ENCODE measurements at regions of chr14 and their contacts with region 1.

Region 1: GRCh38 chr14:34012978-34013720 is 62.3 kb upstream of the EGLN3 start:
- DNase-seq: no peak
- ATAC-seq: no peak
- H3K4me3 ChIP-seq: no peak overlapping the region
- H3K27ac ChIP-seq: no peak overlapping the region
- H3K4me1 ChIP-seq: peaks cover 2% of the 10 kb centered on the region
- H3K27me3 ChIP-seq: no peaks in the 10 kb centered on the region
- CTCF ChIP-seq: no peak

Region 2: DNA sequence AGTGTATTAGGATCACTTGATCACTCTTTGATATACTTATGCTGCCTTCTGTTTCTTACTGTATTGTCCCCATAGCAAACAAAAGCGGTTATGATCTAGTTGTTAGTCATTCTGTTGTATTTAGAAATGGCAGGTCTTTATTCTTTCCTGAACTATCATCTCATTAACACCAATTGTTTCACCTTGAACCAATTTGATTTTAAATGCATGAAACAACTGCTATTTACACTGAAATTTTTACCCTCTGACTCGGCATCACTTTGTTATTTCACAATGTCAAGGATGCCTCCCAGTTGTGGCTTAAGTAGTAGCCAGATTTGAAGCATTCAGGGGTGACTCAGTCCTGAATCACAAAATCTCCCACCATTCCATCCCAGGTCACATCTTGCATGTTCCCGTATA is 365.8 kb before region 1 on chr14:
- intact Hi-C with region 1: no loop called
- DNase-seq: no peak
- ATAC-seq: no peak
- H3K4me3 ChIP-seq: no peak overlapping the region
- H3K27ac ChIP-seq: no peak overlapping the region
- H3K4me1 ChIP-seq: no peaks in the 10 kb centered on the region
- H3K27me3 ChIP-seq: no peaks in the 10 kb centered on the region
- CTCF ChIP-seq: no peak

Region 3: DNA sequence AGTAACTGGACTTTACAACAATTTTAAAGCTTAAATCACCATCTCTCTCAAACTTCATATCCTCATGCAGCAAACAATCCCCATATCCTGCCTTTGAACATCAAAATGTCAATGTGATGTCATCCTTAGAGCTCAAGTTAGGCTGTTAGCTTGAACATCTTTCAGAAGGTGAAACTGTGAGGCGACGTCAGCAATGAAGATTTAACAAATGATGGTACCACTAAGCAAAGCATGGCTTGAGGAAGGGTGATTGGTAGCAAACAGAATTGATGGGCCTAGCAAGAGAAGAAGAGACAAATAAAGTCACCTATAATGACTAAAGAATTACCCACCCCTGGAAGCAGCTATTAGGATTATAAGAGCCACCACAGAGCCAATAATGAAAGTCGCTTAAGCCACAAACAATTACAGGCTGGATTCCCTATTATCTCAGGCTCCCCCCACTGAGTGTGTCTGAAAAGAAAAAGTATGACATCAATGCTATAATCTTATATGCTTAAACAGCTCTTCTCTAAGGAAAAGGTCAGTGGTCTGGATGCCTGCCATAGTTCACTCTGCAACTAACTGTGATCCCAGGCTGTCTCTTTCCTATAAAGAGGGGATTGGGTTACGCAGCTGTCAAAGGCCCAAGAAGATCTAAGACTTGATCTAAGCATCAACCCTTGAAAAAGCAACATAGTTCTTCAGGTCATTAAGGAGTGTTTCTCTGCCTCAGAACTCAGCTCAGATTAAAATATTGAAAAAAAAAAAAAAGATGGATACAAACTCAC is 80.4 kb before region 1 on chr14:
- intact Hi-C with region 1: no loop called
- DNase-seq: no peak
- ATAC-seq: peak; percentile 48 to 68 (median 58)
- H3K4me3 ChIP-seq: no peak overlapping the region
- H3K27ac ChIP-seq: no peak overlapping the region
- H3K4me1 ChIP-seq: peaks cover 40% of the 10 kb centered on the region
- H3K27me3 ChIP-seq: no peaks in the 10 kb centered on the region
- CTCF ChIP-seq: no peak

Region 4: DNA sequence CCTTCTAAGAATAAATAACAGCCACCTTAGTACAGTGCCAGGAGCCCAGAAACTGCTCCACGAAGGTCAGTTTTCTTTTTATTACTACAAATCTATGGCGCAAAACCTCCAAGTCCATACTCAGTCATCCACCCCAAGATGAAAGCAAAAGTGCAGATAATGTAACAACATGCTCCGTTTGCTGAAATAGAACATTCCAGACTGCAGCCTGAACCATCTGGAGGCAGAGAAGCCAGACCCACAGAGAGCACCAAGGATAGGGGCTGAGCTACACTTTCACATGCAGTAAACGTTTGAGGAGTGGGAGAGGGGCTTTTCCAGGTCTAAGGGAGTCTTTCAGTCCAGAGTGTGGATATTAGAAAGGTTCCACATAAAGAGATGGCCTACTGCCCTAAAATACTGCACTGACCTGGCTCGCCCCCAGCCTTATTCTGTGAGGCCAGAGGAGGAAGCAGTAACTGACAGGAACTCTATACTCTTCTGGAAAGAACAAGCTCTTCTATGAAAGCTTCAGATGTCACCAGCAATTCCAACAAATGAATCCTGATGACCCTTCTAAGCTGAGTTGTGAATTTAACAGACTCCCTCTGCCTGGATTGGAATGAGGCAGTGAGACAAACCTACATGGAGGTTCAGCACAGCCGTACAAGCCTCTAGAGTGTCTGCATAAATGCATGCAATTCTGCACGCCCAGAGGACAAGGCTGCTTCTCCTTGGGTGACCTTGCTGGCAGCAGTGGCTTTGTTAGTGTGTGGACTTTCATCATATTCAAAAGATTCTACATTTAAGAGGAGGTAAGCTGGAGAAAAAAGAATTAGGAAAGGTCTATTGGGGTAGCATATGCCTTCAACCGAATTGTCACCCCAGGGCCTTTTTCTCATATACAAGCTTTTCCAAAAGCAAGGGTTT is 91.6 kb after region 1 on chr14:
- intact Hi-C with region 1: loop called in 1 of 2 experiments (anchors 5 kb)
- DNase-seq: no peak
- ATAC-seq: peak; percentile 33 to 82 (median 67)
- H3K4me3 ChIP-seq: no peak overlapping the region
- H3K27ac ChIP-seq: no peak overlapping the region
- H3K4me1 ChIP-seq: peaks cover 16% of the 10 kb centered on the region
- H3K27me3 ChIP-seq: no peaks in the 10 kb centered on the region
- CTCF ChIP-seq: no peak

Region 5: DNA sequence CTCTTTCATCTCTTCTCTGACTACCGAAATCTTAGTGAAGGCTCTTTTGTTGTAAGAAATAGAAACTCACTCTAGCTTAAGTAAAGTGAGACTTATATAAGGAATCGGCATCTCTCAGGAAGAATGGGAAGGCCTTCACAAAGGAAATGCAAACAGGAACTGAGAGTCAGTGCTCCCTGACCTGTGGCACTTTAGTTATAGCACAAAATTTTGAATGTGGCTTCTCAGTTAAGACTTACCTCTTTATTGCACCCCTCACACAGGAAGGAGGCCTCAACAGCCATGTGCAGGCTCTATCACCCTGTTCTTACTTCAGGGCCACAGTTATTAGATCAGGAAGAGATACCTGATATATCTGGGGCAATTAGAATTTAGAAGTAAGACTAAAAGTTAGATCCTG is 162.4 kb after region 1 on chr14:
- intact Hi-C with region 1: no loop called
- DNase-seq: no peak
- ATAC-seq: no peak
- H3K4me3 ChIP-seq: no peak overlapping the region
- H3K27ac ChIP-seq: no peak overlapping the region
- H3K4me1 ChIP-seq: peaks cover 8% of the 10 kb centered on the region
- H3K27me3 ChIP-seq: no peaks in the 10 kb centered on the region
- CTCF ChIP-seq: no peak

Measured in psoas muscle (tissue), 8 donors.